ENCODE measurements at regions of chr3 and their contacts with region 1.

Region 1: DNA sequence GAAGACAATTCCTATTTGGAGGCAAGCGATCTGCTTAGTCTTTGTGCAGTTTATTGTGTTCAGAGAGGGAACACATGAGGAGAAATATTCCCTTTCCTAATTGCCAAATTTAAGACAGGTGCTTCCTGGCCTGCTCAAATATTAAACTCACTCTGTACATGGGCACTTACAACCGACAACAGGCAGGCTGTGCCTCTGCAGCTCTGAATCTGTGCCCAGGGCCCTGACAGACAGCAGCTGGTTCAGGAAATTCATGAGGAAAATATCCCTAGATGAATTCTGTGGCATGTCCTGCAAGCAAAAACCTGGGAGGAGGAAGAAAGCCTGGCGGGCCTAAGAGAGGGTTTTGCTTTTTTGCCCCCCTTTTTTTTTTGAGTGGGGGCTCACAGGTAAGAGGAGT is 169.3 kb upstream of the TRIM42 start:
- DNase-seq: no peak
- H3K4me3 ChIP-seq: no peak overlapping the region
- H3K27ac ChIP-seq: no peak overlapping the region
- H3K4me1 ChIP-seq: no peaks in the 10 kb centered on the region
- H3K27me3 ChIP-seq: no peaks in the 10 kb centered on the region
- CTCF ChIP-seq: no peak
- POLR2A ChIP-seq: no peak

Region 2: GRCh38 chr3:140552898-140553297 is 44.3 kb after region 1 on chr3:
- intact Hi-C with region 1: loop called (anchors 2 kb)
- DNase-seq: no peak
- H3K4me3 ChIP-seq: no peak overlapping the region
- H3K27ac ChIP-seq: no peak overlapping the region
- H3K4me1 ChIP-seq: no peaks in the 10 kb centered on the region
- H3K27me3 ChIP-seq: no peaks in the 10 kb centered on the region
- CTCF ChIP-seq: no peak
- POLR2A ChIP-seq: no peak

Region 3: GRCh38 chr3:140585828-140586227 is 77.3 kb after region 1 on chr3:
- intact Hi-C with region 1: no loop called
- DNase-seq: no peak
- H3K4me3 ChIP-seq: no peak overlapping the region
- H3K27ac ChIP-seq: no peak overlapping the region
- H3K4me1 ChIP-seq: no peaks in the 10 kb centered on the region
- H3K27me3 ChIP-seq: no peaks in the 10 kb centered on the region
- CTCF ChIP-seq: no peak
- POLR2A ChIP-seq: no peak